SK-N-SH (cell line): ENCODE measurements at regions of chr1 and their contacts with region 1.

Region 1: GRCh38 chr1:67149179-67149770 is 14.5 kb upstream of the C1orf141 start:
- DNase-seq: peak; percentile 70
- H3K4me3 ChIP-seq: peak overlapping the region in 1 of 2 experiments; percentile 20; a peak in 1 of 4 replicates
- H3K27ac ChIP-seq: no peak overlapping the region
- H3K4me1 ChIP-seq: no peaks in the 10 kb centered on the region
- H3K27me3 ChIP-seq: no peaks in the 10 kb centered on the region
- CTCF ChIP-seq: peak; percentile 72
- EP300 ChIP-seq: no peak
- RAD21 ChIP-seq: peak; percentile 87

Region 2: DNA sequence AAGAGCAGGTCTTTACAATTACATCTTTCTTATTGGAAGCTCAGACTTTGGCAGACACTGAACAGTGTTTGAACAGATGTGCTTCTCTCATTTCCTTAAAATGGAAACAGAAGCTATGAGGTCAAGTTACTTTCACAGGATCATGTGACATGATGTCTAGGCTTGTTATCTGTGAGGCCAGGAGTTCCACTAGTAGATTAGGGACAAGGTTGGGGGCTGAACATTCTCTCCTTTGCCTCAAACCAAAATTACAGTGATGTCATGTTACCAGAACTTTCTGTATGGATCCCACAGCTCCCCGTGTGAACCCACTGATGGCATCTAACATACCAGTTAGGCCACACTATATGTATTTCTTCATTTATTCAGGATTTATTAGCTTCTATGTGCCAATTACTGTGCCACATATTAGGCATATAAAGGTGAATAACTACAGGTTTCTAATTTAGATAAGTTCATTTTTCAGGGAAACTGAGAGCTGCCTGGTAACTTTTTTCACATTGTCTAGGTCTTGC is 391.0 kb before region 1 on chr1:
- CTCF ChIA-PET with region 1: interaction called, 19 read pairs
- POLR2A ChIA-PET with region 1: no interaction called
- DNase-seq: no peak
- H3K4me3 ChIP-seq: no peak overlapping the region
- H3K27ac ChIP-seq: peak overlapping the region in 1 of 2 experiments; percentile 73; a peak in 2 of 4 replicates
- H3K4me1 ChIP-seq: peaks cover 0 to 6% of the 10 kb centered on the region in 2 experiments; a peak in 2 of 4 replicates
- H3K27me3 ChIP-seq: no peaks in the 10 kb centered on the region
- CTCF ChIP-seq: no peak
- EP300 ChIP-seq: peak in 1 of 2 experiments; percentile 13; a peak in 1 of 4 replicates
- RAD21 ChIP-seq: no peak

Region 3: GRCh38 chr1:66996018-66996682 is 153.1 kb before region 1 on chr1:
- CTCF ChIA-PET with region 1: interaction called, 61 read pairs
- POLR2A ChIA-PET with region 1: interaction called, 4 read pairs
- DNase-seq: peak; percentile 48
- H3K4me3 ChIP-seq: peak overlapping the region in 1 of 2 experiments; percentile 28; a peak in 1 of 4 replicates
- H3K27ac ChIP-seq: no peak overlapping the region
- H3K4me1 ChIP-seq: peaks cover 0 to 3% of the 10 kb centered on the region in 2 experiments; a peak in 1 of 4 replicates
- H3K27me3 ChIP-seq: no peaks in the 10 kb centered on the region
- CTCF ChIP-seq: peak; percentile 83
- EP300 ChIP-seq: no peak
- RAD21 ChIP-seq: peak; percentile 91

Region 4: GRCh38 chr1:67162957-67163356 is 13.7 kb after region 1 on chr1:
- CTCF ChIA-PET with region 1: interaction called, 15 read pairs
- POLR2A ChIA-PET with region 1: no interaction called
- DNase-seq: no peak
- H3K4me3 ChIP-seq: no peak overlapping the region
- H3K27ac ChIP-seq: no peak overlapping the region
- H3K4me1 ChIP-seq: no peaks in the 10 kb centered on the region
- H3K27me3 ChIP-seq: no peaks in the 10 kb centered on the region
- CTCF ChIP-seq: no peak
- EP300 ChIP-seq: peak in 1 of 2 experiments; percentile 56; a peak in 1 of 4 replicates
- RAD21 ChIP-seq: no peak

Region 5: DNA sequence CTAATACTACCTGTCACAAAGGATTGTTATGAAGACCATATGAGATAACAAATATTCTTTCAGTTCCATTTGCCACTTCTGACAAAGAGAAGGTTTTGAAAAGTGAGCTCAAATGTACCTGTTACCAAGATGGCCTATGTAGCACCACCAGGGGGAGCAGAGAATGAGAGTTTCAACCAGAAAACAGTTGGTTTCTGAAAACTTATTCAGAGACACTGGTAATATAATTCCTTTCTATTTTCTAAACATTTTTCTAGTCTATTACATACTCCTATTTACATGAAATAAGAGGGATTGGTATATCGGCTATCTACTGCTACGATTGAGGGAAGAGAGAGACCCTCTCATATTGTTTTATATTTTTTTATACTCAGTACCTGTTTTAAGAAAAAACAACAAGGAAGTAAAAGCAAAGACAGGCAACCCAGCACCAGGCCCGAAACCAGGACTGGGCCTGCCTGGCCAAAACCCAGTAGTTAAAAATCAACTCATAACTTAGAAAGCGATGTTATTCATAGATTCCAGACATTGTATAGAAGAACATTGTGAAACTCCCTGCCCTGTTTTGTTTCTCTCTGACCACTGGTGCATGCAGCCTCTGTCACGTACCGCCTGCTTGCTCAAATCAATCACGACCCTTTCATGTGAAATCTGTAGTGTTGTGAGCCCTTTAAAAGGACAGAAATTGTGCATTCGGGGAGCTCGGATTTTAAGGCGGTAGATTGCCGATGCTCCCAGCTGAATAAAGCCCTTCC is 65.3 kb after region 1 on chr1:
- CTCF ChIA-PET with region 1: interaction called, 43 read pairs
- POLR2A ChIA-PET with region 1: no interaction called
- DNase-seq: no peak
- H3K4me3 ChIP-seq: no peak overlapping the region; a peak in 1 of 4 replicates
- H3K27ac ChIP-seq: no peak overlapping the region
- H3K4me1 ChIP-seq: no peaks in the 10 kb centered on the region; a peak in 1 of 4 replicates
- H3K27me3 ChIP-seq: no peaks in the 10 kb centered on the region
- CTCF ChIP-seq: peak; percentile 70
- EP300 ChIP-seq: no peak
- RAD21 ChIP-seq: peak; percentile 37; the same call in 1 of the 2 replicates